ENCODE measurements at regions of chr5 and their contacts with region 1.

Region 1: GRCh38 chr5:148730943-148731861 is 76.9 kb upstream of the HTR4 start:
- DNase-seq: peak in 1 of 2 donors; percentile 71
- H3K4me3 ChIP-seq: no peak overlapping the region
- CTCF ChIP-seq: peak in 1 of 3 donors; percentile 36
- POLR2A ChIP-seq: no peak

Region 2: GRCh38 chr5:148457183-148457620 is 274.0 kb before region 1 on chr5:
- intact Hi-C with region 1: loop called (anchors 10 kb)
- DNase-seq: no peak
- H3K4me3 ChIP-seq: no peak overlapping the region
- CTCF ChIP-seq: no peak
- POLR2A ChIP-seq: no peak

Region 3: GRCh38 chr5:149035372-149035790 is 304.2 kb after region 1 on chr5:
- intact Hi-C with region 1: loop called (anchors 10 kb)
- DNase-seq: peak; percentile 66 to 93
- H3K4me3 ChIP-seq: no peak overlapping the region
- CTCF ChIP-seq: peak in 1 of 3 donors; percentile 40
- POLR2A ChIP-seq: no peak

Region 4: DNA sequence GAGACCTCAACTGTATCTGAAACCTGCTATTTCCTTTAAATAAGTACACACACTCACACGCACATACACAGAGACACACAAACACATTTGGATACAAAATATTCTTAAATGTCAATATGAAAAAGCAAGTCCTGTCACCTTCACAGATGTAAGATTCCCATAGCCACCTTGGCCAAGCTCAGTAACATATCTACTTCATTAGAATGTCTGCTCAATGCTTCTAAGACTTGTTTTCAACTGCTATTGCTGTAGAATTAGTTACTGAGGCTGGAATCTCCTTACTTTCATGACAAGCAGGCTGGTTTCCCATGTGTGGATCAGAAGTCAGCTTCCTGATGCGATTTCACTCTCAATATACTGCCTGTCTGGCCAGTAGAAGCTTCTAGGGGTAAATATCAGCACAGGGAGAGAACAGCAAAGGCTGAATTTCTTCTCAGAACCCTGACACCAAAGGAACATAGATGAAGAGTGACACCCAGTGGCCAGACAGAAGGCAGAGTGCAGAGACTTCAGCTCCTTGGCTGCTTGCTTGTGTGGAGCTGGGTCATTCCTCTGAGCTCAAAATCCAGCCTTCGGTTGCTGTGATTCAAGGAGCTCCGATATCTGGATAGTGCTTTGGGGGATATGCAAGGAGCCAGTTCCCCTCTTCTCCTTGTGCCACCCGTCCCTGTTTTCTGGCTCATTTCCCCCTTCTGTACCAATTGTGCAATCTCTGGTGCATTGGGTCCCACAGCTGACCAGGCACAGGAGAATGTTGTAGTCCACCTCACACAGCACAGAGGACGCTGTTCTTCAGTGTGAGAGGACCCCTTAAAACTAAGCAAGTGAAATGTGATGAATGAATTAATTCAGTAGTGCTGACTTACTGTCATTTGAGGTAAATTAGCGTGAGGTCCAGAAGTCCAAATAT is 383.5 kb after region 1 on chr5:
- intact Hi-C with region 1: loop called (anchors 10 kb)
- DNase-seq: peak in 1 of 2 donors; percentile 50
- H3K4me3 ChIP-seq: no peak overlapping the region
- CTCF ChIP-seq: no peak
- POLR2A ChIP-seq: no peak

Region 5: GRCh38 chr5:149240354-149240998 is 509.3 kb after region 1 on chr5:
- intact Hi-C with region 1: loop called (anchors 10 kb)
- DNase-seq: peak in 1 of 2 donors; percentile 51
- H3K4me3 ChIP-seq: no peak overlapping the region
- CTCF ChIP-seq: no peak
- POLR2A ChIP-seq: no peak